RWPE1 (cell line): ENCODE measurements at regions of chr1 and their contacts with region 1.

Region 1: GRCh38 chr1:201119206-201120197 is 7.3 kb upstream of the CACNA1S start:
- DNase-seq: peak; percentile 45
- H3K27ac ChIP-seq: no peak overlapping the region
- CTCF ChIP-seq: peak; percentile 44

Region 2: GRCh38 chr1:199706826-199707606 is 1412.5 kb before region 1 on chr1:
- CTCF ChIA-PET with region 1: no interaction called
- POLR2A ChIA-PET with region 1: no interaction called
- DNase-seq: no peak
- H3K27ac ChIP-seq: no peak overlapping the region
- CTCF ChIP-seq: no peak

Region 3: DNA sequence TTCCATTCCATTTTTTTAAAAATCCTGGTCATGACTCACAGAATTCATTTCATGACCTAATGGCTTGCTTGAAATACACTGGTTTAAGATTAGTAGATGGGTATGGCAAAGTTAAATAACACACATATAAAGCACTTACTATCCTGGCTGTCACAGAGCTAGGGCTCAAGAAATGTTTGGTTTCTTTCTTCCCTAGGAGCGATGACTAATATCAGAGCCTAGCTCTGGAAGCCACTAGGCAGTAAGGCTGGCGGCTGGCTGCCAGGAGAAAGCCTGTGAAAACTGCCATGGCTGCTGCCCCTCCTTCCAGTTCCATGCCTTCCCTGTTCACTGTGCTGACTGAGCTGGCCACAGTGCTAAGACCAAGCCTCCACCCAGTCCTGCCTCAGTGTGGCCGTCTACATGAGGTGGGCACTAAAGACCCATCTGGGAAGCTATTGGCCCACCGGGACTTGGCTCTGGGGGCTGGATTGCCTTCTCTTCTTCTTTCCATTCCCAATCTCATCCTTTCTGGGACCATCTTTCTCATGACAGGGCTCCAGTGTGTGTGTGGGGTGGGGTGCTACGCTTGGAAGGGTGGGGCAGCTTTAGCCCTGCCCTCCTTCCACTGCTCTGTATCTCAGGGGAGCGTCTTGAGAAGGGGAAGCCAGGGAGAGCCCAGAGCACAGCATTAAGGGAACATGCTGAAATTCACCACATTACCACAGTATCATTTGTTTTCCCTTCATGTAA is 18.2 kb after region 1 on chr1:
- CTCF ChIA-PET with region 1: interaction called, 14 read pairs
- POLR2A ChIA-PET with region 1: no interaction called
- DNase-seq: peak; percentile 59
- H3K27ac ChIP-seq: peak overlapping the region; percentile 69
- CTCF ChIP-seq: no peak

Region 4: GRCh38 chr1:201320163-201320788 is 200.8 kb after region 1 on chr1:
- CTCF ChIA-PET with region 1: no interaction called
- POLR2A ChIA-PET with region 1: no interaction called
- DNase-seq: no peak
- H3K27ac ChIP-seq: peak overlapping the region; percentile 90
- CTCF ChIP-seq: no peak